ENCODE measurements at regions of chr6 and their contacts with region 1.

Region 1: DNA sequence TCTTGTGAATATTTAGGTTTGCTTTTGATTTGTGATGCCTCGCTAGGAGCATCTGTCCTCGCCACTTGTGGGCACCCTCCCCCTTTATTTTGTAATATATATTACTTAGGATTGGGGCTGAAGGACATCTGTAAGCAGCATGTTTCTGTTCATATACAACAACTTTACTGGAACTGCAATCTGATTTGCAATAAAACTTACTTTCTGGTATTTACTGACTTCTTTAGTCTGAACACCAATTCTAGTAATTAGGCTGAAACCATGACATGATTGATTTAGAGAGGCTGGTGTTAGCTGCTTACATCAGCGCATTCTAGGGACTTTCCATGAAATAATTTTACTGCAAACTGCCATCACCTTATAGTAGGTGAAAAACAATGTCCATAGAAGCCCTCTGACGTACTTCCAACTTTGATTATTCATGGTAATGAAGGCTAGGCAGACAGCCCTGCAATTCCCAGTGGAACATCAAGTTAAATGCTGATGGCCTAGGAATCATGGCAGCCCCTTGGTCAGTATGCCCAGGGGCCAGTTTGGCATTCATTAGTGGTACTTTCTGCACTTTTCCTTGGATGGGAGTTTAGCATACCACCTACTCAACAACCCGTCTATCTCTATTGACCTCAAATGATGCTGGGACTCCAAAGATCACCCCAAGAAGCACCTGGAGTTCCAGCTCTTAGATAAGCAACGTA is 132.9 kb upstream of the MCHR2 start:
- DNase-seq: no peak
- H3K4me3 Mint-ChIP-seq: no peak overlapping the region
- H3K27ac Mint-ChIP-seq: peak overlapping the region; percentile 77
- H3K4me1 Mint-ChIP-seq: peaks cover 19% of the 10 kb centered on the region
- H3K27me3 Mint-ChIP-seq: no peaks in the 10 kb centered on the region

Region 2: DNA sequence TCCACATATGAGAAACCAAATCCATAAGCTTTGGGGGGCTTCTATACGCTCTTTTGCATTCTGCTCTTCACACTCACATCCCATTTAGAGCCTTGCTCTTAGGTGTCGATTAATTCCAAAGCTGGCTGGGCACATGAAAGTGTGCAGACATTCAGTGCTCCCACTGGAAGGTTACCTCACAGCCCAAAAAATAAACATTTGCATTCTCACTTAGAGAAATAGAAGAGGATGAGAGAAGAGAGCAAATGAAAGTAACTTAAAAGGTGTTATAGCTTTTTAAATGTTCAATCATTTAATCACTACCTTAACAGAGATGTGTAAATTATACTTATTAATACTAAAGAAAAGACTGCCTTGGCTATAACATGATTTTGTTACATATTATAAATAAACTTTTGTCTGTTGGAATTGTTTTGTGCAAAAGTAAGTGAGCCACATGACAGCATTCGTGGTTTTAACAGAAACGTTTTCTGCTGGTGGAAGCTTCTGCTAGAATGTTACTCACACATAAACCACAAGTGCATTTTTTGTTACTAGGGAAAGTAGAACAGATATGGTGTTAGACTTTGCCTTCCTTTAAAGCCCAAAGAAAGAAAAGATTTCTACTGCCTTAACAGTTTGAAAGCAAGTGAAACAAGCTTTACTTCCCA is 221.1 kb after region 1 on chr6:
- intact Hi-C with region 1: loop called (anchors 5 kb)
- DNase-seq: no peak
- H3K4me3 Mint-ChIP-seq: no peak overlapping the region
- H3K27ac Mint-ChIP-seq: no peak overlapping the region
- H3K4me1 Mint-ChIP-seq: peaks cover 17% of the 10 kb centered on the region
- H3K27me3 Mint-ChIP-seq: peaks cover 5% of the 10 kb centered on the region